GM12878 (cell line): ENCODE measurements at regions of chr14 and their contacts with region 1.

Region 1: GRCh38 chr14:24299255-24300195 is at the starts of genes DHRS1 and NOP9:
- DNase-seq: peak; percentile 65
- ATAC-seq: peak; percentile 79
- H3K4me3 ChIP-seq: peak within 1 kb of the TSS; percentile 96
- H3K27ac ChIP-seq: peak within 1 kb of the TSS; percentile 51
- H3K4me1 ChIP-seq: peaks cover 25% of the 10 kb centered on the region
- H3K27me3 ChIP-seq: no peaks in the 10 kb centered on the region
- CTCF ChIP-seq: no peak
- EP300 ChIP-seq: no peak
- POLR2A ChIP-seq: peak; percentile 85
- RAD21 ChIP-seq: no peak
- polyA plus RNA-seq, gene DHRS1: 44.6 to 45.0 TPM
- polyA plus RNA-seq, gene NOP9: 2.4 to 3.4 TPM

Region 2: GRCh38 chr14:23881282-23881681 is 418.2 kb before region 1 on chr14:
- CTCF ChIA-PET with region 1: no interaction called
- POLR2A ChIA-PET with region 1: no interaction called
- RAD21 ChIA-PET with region 1: no interaction called
- SMC1A ChIA-PET with region 1: no interaction called
- in situ Hi-C with region 1: no loop called
- intact Hi-C with region 1: no loop called
- DNase-seq: no peak
- ATAC-seq: no peak
- H3K4me3 ChIP-seq: no peak overlapping the region
- H3K27ac ChIP-seq: no peak overlapping the region
- H3K4me1 ChIP-seq: no peaks in the 10 kb centered on the region
- H3K27me3 ChIP-seq: no peaks in the 10 kb centered on the region
- CTCF ChIP-seq: no peak
- EP300 ChIP-seq: no peak
- POLR2A ChIP-seq: no peak
- RAD21 ChIP-seq: no peak

Region 3: DNA sequence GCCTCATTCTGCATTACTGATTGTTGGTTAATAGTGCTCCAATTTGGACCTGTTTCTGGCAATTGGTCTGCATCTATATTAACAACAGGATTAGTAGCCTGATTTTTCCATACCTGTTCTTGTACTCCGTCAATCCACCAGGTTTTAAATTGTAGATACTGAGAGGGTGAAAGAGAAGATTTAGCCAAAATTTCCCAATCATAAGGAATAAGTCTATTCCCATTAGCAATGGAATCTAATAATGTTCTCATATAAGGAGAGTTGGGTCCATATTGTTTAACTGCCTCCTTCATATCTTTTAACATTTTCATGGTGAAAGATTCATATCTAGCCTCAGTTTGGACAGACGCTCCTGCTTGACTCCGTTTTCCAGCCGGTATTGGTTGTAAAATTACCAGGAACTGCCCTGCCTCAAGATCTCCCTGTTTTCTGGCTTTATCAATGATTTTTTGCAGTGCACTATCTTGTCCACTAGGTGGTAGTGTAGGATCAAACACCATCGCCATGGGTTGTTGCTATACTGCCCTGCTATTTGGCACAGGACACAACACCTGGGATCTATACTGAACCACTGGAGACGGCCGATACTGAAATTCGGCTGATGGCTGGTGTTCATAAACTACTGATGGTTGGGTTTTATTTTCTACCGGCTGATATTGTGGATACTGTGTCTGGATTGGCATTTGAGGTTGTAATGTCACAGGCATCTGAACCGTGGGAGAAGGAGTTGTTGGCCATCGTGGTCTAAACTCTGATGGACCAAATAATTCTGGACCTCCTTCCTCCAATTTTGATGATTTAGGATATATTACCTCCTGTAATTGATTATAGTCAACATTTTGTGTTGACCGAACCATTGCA is 285.6 kb before region 1 on chr14:
- CTCF ChIA-PET with region 1: no interaction called
- POLR2A ChIA-PET with region 1: no interaction called
- RAD21 ChIA-PET with region 1: no interaction called
- SMC1A ChIA-PET with region 1: no interaction called
- in situ Hi-C with region 1: no loop called
- intact Hi-C with region 1: loop called (anchors 1 kb)
- DNase-seq: peak; percentile 57
- ATAC-seq: peak; percentile 96
- H3K4me3 ChIP-seq: no peak overlapping the region
- H3K27ac ChIP-seq: no peak overlapping the region
- H3K4me1 ChIP-seq: no peaks in the 10 kb centered on the region
- H3K27me3 ChIP-seq: no peaks in the 10 kb centered on the region
- CTCF ChIP-seq: peak; percentile 77 to 91 (median 81)
- EP300 ChIP-seq: no peak
- POLR2A ChIP-seq: no peak
- RAD21 ChIP-seq: peak; percentile 97

Region 4: GRCh38 chr14:24093901-24094761 is 205.4 kb before region 1 on chr14 and contains the start of gene PCK2:
- CTCF ChIA-PET with region 1: interaction called, 4 read pairs
- POLR2A ChIA-PET with region 1: no interaction called
- RAD21 ChIA-PET with region 1: no interaction called
- SMC1A ChIA-PET with region 1: no interaction called
- in situ Hi-C with region 1: no loop called
- intact Hi-C with region 1: loop called (anchors 5 kb)
- DNase-seq: no peak
- ATAC-seq: peak; percentile 79
- H3K4me3 ChIP-seq: peak within 1 kb of the TSS; percentile 98
- H3K27ac ChIP-seq: peak within 1 kb of the TSS; percentile 99
- H3K4me1 ChIP-seq: 0 out of 2 replicates have a peak, but pooled peaks cover 3% of the 10 kb centered on the region
- H3K27me3 ChIP-seq: no peaks in the 10 kb centered on the region
- CTCF ChIP-seq: no peak
- EP300 ChIP-seq: no peak
- POLR2A ChIP-seq: peak; percentile 91
- RAD21 ChIP-seq: no peak
- polyA plus RNA-seq, gene PCK2: 6.6 to 12.3 TPM

Region 5: GRCh38 chr14:24188251-24189058 is 111.1 kb before region 1 on chr14 and contains the start of gene IPO4:
- CTCF ChIA-PET with region 1: interaction called, 11 read pairs
- POLR2A ChIA-PET with region 1: no interaction called
- RAD21 ChIA-PET with region 1: interaction called, 9 read pairs
- SMC1A ChIA-PET with region 1: no interaction called
- in situ Hi-C with region 1: no loop called
- intact Hi-C with region 1: loop called (anchors 2 kb)
- DNase-seq: peak; percentile 88
- ATAC-seq: peak; percentile 94
- H3K4me3 ChIP-seq: peak within 1 kb of the TSS; percentile 79
- H3K27ac ChIP-seq: peak within 1 kb of the TSS; percentile 34
- H3K4me1 ChIP-seq: 0 out of 2 replicates have a peak, but pooled peaks cover 4% of the 10 kb centered on the region
- H3K27me3 ChIP-seq: no peaks in the 10 kb centered on the region
- CTCF ChIP-seq: no peak
- EP300 ChIP-seq: peak in 1 of 2 experiments; percentile 70; a peak in 2 of 4 replicates
- POLR2A ChIP-seq: peak; percentile 94
- RAD21 ChIP-seq: no peak
- polyA plus RNA-seq, gene IPO4: 7.8 to 10.3 TPM

Region 6: GRCh38 chr14:24215495-24216344 is 83.8 kb before region 1 on chr14 and contains the start of gene MDP1:
- CTCF ChIA-PET with region 1: interaction called, 35 read pairs
- POLR2A ChIA-PET with region 1: interaction called, 7 read pairs
- RAD21 ChIA-PET with region 1: interaction called, 19 read pairs
- SMC1A ChIA-PET with region 1: interaction called, 17 read pairs
- in situ Hi-C with region 1: no loop called
- intact Hi-C with region 1: loop called (anchors 1 kb)
- DNase-seq: peak; percentile 79
- ATAC-seq: peak; percentile 83
- H3K4me3 ChIP-seq: peak within 1 kb of the TSS; percentile 86
- H3K27ac ChIP-seq: peak within 1 kb of the TSS; percentile 82
- H3K4me1 ChIP-seq: peaks cover 15% of the 10 kb centered on the region
- H3K27me3 ChIP-seq: no peaks in the 10 kb centered on the region
- CTCF ChIP-seq: peak; percentile 82 to 94 (median 83); a peak in 5 of 6 replicates
- EP300 ChIP-seq: 0 out of 4 replicates have a peak, but pooled peaks have one; percentile 8 to 31
- POLR2A ChIP-seq: peak; percentile 93
- RAD21 ChIP-seq: peak; percentile 76
- polyA plus RNA-seq, gene MDP1: 39.2 to 45.8 TPM

Region 7: DNA sequence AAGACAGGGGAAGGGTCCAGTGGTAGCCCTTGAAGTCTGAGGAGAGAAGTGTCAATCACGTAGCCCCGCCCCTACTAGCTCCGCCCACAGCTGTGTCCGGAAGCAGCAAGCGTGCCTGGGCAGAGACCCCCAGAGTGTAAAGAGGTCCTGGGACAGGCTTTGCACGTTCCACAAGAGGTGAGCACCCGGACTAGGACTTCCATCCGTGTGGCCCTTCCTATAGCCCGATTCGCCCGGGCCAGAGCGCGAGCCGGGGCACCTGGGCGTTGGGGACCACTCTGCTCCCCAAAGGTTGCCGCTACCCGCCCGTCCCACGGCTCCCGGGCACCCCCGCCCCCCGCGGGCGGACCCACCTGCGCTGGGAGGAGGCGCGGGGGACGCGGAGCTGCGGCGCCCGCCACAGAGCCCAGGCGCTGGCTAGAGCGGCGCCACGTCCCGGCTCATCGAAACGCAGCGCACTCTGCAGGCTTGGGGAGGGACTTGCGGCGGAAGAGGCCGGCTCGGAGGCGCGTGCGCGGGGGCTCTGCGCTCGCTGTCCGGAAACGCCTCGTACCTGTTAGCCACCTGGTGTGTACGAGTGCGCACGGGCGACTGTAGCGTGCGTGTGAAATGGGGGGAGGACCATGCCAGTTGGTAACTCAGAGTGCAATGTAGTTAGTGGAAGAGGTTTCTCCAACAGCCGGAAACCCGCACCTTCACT is 28.2 kb before region 1 on chr14 and contains the start of gene RABGGTA:
- CTCF ChIA-PET with region 1: interaction called, 269 read pairs
- POLR2A ChIA-PET with region 1: interaction called, 14 read pairs
- RAD21 ChIA-PET with region 1: interaction called, 20 read pairs
- SMC1A ChIA-PET with region 1: interaction called, 115 read pairs
- in situ Hi-C with region 1: no loop called
- intact Hi-C with region 1: loop called (anchors 1 kb)
- DNase-seq: peak; percentile 80
- ATAC-seq: peak; percentile 89
- H3K4me3 ChIP-seq: peak within 1 kb of the TSS; percentile 88
- H3K27ac ChIP-seq: peak within 1 kb of the TSS; percentile 99
- H3K4me1 ChIP-seq: peaks cover 25% of the 10 kb centered on the region
- H3K27me3 ChIP-seq: no peaks in the 10 kb centered on the region
- CTCF ChIP-seq: peak; percentile 84 to 93 (median 86); a peak in 5 of 6 replicates
- EP300 ChIP-seq: no peak
- POLR2A ChIP-seq: peak; percentile 93
- RAD21 ChIP-seq: 0 out of 2 replicates have a peak, but pooled peaks have one; percentile 25
- polyA plus RNA-seq, gene RABGGTA: 38.2 to 38.6 TPM

Region 8: DNA sequence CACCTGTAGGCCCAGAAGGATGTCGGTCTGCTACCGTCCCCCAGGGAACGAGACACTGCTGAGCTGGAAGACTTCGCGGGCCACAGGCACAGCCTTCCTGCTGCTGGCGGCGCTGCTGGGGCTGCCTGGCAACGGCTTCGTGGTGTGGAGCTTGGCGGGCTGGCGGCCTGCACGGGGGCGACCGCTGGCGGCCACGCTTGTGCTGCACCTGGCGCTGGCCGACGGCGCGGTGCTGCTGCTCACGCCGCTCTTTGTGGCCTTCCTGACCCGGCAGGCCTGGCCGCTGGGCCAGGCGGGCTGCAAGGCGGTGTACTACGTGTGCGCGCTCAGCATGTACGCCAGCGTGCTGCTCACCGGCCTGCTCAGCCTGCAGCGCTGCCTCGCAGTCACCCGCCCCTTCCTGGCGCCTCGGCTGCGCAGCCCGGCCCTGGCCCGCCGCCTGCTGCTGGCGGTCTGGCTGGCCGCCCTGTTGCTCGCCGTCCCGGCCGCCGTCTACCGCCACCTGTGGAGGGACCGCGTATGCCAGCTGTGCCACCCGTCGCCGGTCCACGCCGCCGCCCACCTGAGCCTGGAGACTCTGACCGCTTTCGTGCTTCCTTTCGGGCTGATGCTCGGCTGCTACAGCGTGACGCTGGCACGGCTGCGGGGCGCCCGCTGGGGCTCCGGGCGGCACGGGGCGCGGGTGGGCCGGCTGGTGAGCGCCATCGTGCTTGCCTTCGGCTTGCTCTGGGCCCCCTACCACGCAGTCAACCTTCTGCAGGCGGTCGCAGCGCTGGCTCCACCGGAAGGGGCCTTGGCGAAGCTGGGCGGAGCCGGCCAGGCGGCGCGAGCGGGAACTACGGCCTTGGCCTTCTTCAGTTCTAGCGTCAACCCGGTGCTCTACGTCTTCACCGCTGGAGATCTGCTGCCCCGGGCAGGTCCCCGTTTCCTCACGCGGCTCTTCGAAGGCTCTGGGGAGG is 11.4 kb after region 1 on chr14 and contains the start of gene LTB4R:
- CTCF ChIA-PET with region 1: interaction called, 149 read pairs
- POLR2A ChIA-PET with region 1: interaction called, 13 read pairs
- RAD21 ChIA-PET with region 1: interaction called, 31 read pairs
- SMC1A ChIA-PET with region 1: interaction called, 36 read pairs
- in situ Hi-C with region 1: no loop called
- intact Hi-C with region 1: no loop called
- DNase-seq: no peak
- ATAC-seq: peak; percentile 75
- H3K4me3 ChIP-seq: peak within 1 kb of the TSS; percentile 47
- H3K27ac ChIP-seq: peak within 1 kb of the TSS; percentile 45; the same call in 1 of the 2 replicates
- H3K4me1 ChIP-seq: peaks cover 37% of the 10 kb centered on the region
- H3K27me3 ChIP-seq: no peaks in the 10 kb centered on the region
- CTCF ChIP-seq: peak; percentile 10 to 40 (median 29); a peak in 3 of 6 replicates
- EP300 ChIP-seq: no peak
- POLR2A ChIP-seq: peak; percentile 54; the same call in 1 of the 2 replicates
- RAD21 ChIP-seq: no peak
- polyA plus RNA-seq, gene LTB4R: 1.2 to 1.7 TPM

Region 9: DNA sequence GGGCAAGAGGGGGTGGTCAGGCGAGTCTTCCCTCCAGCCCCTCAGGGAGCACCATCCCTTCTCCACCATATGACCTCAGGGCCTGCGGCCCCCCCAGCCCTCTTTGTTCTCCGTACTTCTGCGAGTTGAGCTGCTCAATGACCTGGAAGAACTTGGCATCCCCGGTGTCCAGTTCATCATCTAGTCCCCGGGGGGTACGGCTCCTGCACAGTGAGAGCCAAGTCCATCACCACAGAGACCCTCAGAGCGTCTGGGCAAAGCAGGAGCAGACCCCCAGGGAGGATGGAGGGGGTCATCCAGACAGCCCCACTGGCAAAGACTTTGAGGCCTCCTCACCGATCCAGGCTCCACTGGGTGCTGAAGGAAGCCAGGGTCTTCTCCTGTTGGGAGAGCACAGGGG is 26.4 kb after region 1 on chr14:
- CTCF ChIA-PET with region 1: no interaction called
- POLR2A ChIA-PET with region 1: no interaction called
- RAD21 ChIA-PET with region 1: no interaction called
- SMC1A ChIA-PET with region 1: no interaction called
- in situ Hi-C with region 1: no loop called
- intact Hi-C with region 1: no loop called
- DNase-seq: no peak
- ATAC-seq: no peak
- H3K4me3 ChIP-seq: no peak overlapping the region
- H3K27ac ChIP-seq: no peak overlapping the region
- H3K4me1 ChIP-seq: no peaks in the 10 kb centered on the region
- H3K27me3 ChIP-seq: no peaks in the 10 kb centered on the region
- CTCF ChIP-seq: no peak
- EP300 ChIP-seq: no peak
- POLR2A ChIP-seq: no peak
- RAD21 ChIP-seq: no peak

Region 10: DNA sequence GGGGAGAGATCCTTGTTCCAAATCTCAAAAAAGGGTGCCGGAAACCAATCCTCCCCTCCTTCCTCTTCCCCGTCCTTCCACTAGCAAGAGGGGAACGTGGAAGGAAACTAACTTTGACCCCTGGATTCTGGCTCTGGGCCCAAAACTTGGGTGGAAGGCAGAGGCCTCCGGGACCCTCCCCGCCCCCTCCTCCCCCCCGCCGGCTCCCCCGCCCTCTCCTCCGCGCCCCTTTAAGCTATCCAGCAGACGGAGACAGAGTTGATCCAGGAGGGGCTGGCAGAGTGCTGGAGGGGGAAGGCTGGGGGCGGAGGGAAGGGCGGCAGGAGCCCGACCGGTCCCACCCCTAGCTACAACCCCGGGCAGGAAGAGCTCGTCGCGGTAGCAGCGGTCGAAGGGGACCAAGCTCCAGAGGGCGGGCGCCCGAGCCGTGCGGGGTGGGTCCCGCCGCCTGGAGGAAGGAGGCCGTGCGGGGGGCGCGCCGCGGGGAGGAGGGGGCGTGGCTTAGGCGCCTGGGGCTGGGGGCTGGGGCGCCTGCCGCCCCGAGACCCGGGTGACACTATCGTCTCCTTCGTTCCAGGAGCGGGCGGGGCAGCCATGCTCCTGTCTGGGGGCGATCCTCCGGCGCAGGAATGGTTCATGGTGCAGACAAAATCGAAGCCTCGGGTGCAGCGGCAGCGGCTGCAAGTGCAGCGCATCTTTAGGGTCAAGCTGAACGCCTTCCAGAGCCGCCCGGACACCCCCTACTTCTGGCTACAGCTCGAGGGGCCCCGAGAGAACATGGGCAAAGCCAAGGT is 99.3 kb after region 1 on chr14 and contains the start of gene NYNRIN:
- CTCF ChIA-PET with region 1: no interaction called
- POLR2A ChIA-PET with region 1: no interaction called
- RAD21 ChIA-PET with region 1: no interaction called
- SMC1A ChIA-PET with region 1: no interaction called
- in situ Hi-C with region 1: no loop called
- intact Hi-C with region 1: no loop called
- DNase-seq: no peak
- ATAC-seq: peak; percentile 43
- H3K4me3 ChIP-seq: no peak within 1 kb of the TSS
- H3K27ac ChIP-seq: no peak within 1 kb of the TSS
- H3K4me1 ChIP-seq: no peaks in the 10 kb centered on the region
- H3K27me3 ChIP-seq: peaks cover 4 to 8% of the 10 kb centered on the region in 2 experiments
- CTCF ChIP-seq: no peak
- EP300 ChIP-seq: no peak
- POLR2A ChIP-seq: no peak
- RAD21 ChIP-seq: no peak
- polyA plus RNA-seq, gene NYNRIN: not detected